Right lobe of liver (tissue), 6 donors: ENCODE measurements at regions of chr19 and their contacts with region 1.

Region 1: GRCh38 chr19:4909897-4910593 is 744 bp downstream of the UHRF1 start:
- DNase-seq: peak; percentile 89 to 93 (median 92)
- ATAC-seq: peak; percentile 91 to 96 (median 94)
- H3K4me3 ChIP-seq: peak overlapping the region; percentile 48 to 56 (median 51)
- H3K27ac ChIP-seq: no peak overlapping the region
- H3K4me1 ChIP-seq: peaks cover 0 to 13% (median 0%) of the 10 kb centered on the region in 4 donors
- H3K27me3 ChIP-seq: no peaks in the 10 kb centered on the region
- CTCF ChIP-seq: no peak
- POLR2A ChIP-seq: no peak

Region 2: DNA sequence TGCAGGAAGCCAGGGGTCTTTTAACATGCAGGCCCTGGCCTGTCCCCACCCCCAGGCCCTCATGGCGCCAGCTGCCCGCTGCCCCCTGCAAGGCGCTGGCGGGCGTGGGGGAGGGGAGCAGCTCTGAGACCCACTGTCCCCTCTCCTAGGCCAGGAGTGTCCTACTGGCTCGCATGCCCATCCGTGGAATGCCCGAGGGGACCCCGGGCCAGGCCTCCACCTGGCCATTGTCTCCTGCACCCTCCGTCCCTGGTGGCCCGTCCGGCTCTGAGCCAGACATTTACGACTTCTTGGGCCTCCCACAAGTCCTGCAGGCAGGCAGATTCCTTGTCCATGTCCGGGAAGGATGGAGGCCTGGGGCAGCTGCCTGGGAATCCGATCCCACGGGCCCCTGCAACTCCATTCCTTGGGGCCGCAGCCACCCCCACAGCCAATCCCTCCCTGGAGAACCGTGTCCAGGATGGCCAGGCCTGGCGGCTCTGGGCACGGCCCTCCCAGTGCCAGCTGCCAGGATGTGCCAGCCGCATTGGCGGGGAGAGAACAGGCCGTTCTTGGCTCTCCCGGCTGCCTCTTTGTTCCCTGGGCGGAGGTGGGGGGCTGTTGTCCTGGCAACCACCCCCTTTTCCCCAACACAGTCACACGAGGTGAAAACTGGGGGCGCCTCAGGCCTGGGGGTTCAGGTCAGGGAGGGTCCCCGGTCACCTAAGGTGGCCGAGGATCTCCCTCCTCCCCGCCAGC is 32.1 kb before region 1 on chr19:
- intact Hi-C with region 1: loop called in 1 of 2 experiments (anchors 5 kb)
- DNase-seq: no peak
- ATAC-seq: peak in 1 of 4 donors; percentile 41
- H3K4me3 ChIP-seq: no peak overlapping the region
- H3K27ac ChIP-seq: no peak overlapping the region
- H3K4me1 ChIP-seq: no peaks in the 10 kb centered on the region
- H3K27me3 ChIP-seq: no peaks in the 10 kb centered on the region
- CTCF ChIP-seq: no peak
- POLR2A ChIP-seq: no peak